Left ventricle myocardium inferior (tissue), 1 donor: ENCODE measurements at regions of chr16 and their contacts with region 1.

Region 1: GRCh38 chr16:24789881-24790280 is 55.9 kb upstream of the SLC5A11 start:
- DNase-seq: no peak
- H3K4me3 ChIP-seq: no peak overlapping the region
- H3K27ac ChIP-seq: no peak overlapping the region
- H3K4me1 ChIP-seq: peaks cover 18% of the 10 kb centered on the region
- H3K27me3 ChIP-seq: no peaks in the 10 kb centered on the region
- CTCF ChIP-seq: no peak

Region 2: GRCh38 chr16:24729985-24730815 is 59.7 kb before region 1 on chr16:
- intact Hi-C with region 1: loop called (anchors 10 kb)
- DNase-seq: peak; percentile 44
- H3K4me3 ChIP-seq: peak overlapping the region; percentile 91
- H3K27ac ChIP-seq: peak overlapping the region; percentile 98
- H3K4me1 ChIP-seq: peaks cover 58% of the 10 kb centered on the region
- H3K27me3 ChIP-seq: no peaks in the 10 kb centered on the region
- CTCF ChIP-seq: no peak

Region 3: GRCh38 chr16:24876231-24876630 is 86.3 kb after region 1 on chr16:
- intact Hi-C with region 1: no loop called
- DNase-seq: no peak
- H3K4me3 ChIP-seq: no peak overlapping the region
- H3K27ac ChIP-seq: no peak overlapping the region
- H3K4me1 ChIP-seq: no peaks in the 10 kb centered on the region
- H3K27me3 ChIP-seq: peaks cover 32% of the 10 kb centered on the region
- CTCF ChIP-seq: no peak